HepG2 (cell line): ENCODE measurements at regions of chr4 and their contacts with region 1.

Region 1: DNA sequence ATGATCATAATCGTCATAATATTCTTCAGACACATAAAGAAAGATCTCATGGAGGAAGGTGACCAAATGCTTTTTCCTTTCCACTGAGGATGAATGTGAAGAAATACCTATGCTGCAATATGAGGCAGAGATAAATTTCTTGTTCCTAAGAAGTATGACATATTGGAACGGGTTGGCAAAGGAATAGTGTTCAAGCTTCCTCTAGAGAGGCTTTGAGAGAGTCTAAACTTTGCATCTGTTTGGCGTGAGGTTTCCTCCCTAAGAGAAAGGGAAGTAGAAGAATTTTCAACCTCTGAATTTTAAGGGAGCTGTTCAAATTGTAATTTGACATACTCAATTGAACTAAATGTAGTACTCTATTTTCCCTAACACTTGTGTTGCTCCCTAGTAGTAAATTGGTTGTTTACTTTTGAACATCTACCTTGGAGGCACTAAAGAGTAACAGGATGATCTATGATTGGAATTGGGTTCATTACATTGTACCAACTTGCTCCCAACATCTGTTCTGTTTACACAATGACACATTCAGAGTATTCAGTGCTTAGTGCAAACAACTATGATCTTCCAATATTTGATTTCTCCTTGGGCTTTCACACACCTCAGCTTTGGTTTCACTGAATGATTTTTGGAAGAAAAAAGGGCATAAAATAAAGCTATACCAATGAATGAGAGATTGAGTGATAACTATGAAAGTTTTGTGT is 122.0 kb downstream of the CORIN start:
- DNase-seq: peak; percentile 55
- ATAC-seq: peak; percentile 93
- H3K4me3 ChIP-seq: no peak overlapping the region
- H3K27ac ChIP-seq: no peak overlapping the region
- H3K4me1 ChIP-seq: peaks cover 10% of the 10 kb centered on the region
- H3K27me3 ChIP-seq: peaks cover 0 to 7% of the 10 kb centered on the region in 2 experiments; a peak in 2 of 5 replicates
- CTCF ChIP-seq: no peak
- EP300 ChIP-seq: peak in 1 of 2 experiments; percentile 38; a peak in 1 of 4 replicates
- POLR2A ChIP-seq: no peak
- RAD21 ChIP-seq: no peak

Region 2: DNA sequence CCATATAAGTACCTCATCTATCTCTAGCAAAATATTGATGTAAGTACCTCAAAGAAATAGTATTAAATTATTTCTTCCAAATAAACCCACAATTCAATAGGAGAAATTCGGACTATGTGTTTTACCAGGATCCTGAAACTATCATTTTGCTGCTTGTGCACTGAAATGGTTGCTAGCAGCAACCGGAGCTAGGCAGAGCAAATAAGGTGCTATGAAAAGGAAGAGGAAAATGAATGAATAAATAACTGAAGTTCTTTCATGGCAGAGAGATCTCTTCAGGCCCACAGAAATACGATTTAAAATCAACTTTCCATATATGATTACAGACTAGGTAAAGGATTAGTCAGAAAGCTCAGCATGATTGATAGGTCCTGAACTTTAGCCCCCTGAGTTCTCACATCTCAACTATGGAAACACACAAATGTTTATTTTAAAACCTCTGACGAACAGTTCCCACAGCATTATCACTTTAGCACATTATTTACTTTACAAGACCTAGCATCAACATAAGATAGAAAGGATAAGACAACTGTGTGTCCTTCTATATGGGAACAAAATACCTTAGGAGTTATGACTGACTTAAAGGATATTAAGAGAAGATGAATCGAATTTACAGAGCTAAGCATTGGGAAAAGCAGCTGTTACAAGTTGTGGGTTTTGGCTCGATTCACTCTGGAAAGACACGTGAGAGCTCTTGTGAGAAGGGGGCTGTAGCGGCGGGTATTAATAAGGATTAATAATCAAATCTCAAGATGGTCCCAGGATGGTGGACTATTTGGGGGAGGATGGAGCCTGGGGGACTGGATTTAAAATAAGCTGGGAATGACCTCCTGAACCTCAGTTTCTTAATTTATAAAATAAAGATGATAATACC is 17.7 kb after region 1 on chr4:
- CTCF ChIA-PET with region 1: no interaction called
- POLR2A ChIA-PET with region 1: no interaction called
- in situ Hi-C with region 1: no loop called
- intact Hi-C with region 1: loop called (anchors 2 kb)
- DNase-seq: peak; percentile 86
- ATAC-seq: peak; percentile 92
- H3K4me3 ChIP-seq: no peak overlapping the region; a peak in 1 of 6 replicates
- H3K27ac ChIP-seq: peak overlapping the region; percentile 31
- H3K4me1 ChIP-seq: peaks cover 37% of the 10 kb centered on the region
- H3K27me3 ChIP-seq: no peaks in the 10 kb centered on the region; a peak in 1 of 5 replicates
- CTCF ChIP-seq: no peak
- EP300 ChIP-seq: peak in 1 of 2 experiments; percentile 73; a peak in 2 of 4 replicates
- POLR2A ChIP-seq: no peak
- RAD21 ChIP-seq: no peak

Region 3: DNA sequence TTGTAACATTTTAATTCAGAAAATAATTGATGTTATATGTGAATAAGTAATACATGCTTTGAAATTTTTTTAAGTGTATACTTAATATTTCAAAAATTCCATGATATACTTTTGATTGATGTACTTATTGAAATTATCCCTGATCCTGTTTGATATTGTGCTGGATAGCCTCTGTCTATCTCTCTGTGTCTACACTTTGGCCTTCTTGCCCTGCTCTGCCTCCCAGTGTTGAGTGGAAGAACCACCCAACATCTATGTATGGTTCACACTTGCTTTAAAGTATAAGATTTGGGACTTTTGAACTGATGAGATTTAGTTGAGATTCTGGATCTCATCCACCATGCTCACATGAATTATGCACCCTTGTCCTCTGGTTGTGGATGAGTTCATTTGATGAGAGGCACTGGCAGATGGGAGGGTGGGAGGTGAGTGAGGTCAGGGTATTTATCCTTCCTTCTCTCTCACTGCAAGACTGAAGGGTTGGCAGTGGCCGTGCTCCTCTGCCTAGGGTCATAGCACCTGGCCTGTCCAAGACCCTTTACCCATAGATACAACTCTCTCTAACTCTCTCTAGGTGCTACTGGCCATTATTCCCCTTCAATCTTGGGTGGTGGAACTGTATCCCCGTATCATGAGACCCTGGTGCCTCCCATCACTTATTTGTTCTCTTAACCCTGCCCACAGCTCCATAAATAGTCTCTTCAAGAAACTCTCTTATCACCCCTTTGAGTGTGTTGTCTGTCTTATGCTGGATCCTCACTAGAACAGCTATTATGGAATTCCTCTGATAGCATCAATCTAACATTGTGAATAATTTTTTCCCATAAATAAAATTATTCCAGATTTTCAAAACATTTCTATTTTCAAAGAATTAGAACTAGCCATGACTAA is 46.8 kb after region 1 on chr4:
- CTCF ChIA-PET with region 1: no interaction called
- POLR2A ChIA-PET with region 1: no interaction called
- in situ Hi-C with region 1: no loop called
- intact Hi-C with region 1: no loop called
- DNase-seq: no peak
- ATAC-seq: peak; percentile 46; the same call in 2 of the 3 replicates
- H3K4me3 ChIP-seq: no peak overlapping the region
- H3K27ac ChIP-seq: no peak overlapping the region
- H3K4me1 ChIP-seq: no peaks in the 10 kb centered on the region
- H3K27me3 ChIP-seq: no peaks in the 10 kb centered on the region
- CTCF ChIP-seq: 0 out of 2 replicates have a peak, but pooled peaks have one; percentile 27
- EP300 ChIP-seq: no peak
- POLR2A ChIP-seq: no peak
- RAD21 ChIP-seq: no peak

Region 4: DNA sequence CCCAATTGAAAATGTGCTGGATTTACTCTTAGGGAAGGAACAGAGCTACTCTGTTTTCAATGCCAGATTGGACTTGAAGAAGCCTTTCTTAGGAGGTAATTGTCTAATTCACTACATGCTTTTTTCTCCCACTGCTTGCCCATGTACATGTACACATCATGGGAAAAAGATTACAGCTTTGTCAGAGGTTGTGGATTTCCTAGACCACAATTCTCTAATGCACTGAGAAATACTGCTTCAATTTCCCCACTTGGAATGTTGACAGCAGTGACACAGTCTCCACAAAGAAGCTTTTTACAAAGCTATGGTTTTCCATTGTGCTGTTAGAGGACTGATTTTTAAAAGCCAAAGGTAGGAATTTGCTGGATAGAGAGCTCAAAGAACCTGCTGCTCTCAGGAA is 793.7 kb after region 1 on chr4:
- CTCF ChIA-PET with region 1: no interaction called
- POLR2A ChIA-PET with region 1: no interaction called
- in situ Hi-C with region 1: no loop called
- intact Hi-C with region 1: no loop called
- DNase-seq: no peak
- ATAC-seq: no peak
- H3K4me3 ChIP-seq: no peak overlapping the region
- H3K27ac ChIP-seq: no peak overlapping the region
- H3K4me1 ChIP-seq: no peaks in the 10 kb centered on the region
- H3K27me3 ChIP-seq: no peaks in the 10 kb centered on the region
- CTCF ChIP-seq: no peak
- EP300 ChIP-seq: no peak
- POLR2A ChIP-seq: no peak
- RAD21 ChIP-seq: no peak